ENCODE measurements at regions of chr7 and their contacts with region 1.

Region 1: DNA sequence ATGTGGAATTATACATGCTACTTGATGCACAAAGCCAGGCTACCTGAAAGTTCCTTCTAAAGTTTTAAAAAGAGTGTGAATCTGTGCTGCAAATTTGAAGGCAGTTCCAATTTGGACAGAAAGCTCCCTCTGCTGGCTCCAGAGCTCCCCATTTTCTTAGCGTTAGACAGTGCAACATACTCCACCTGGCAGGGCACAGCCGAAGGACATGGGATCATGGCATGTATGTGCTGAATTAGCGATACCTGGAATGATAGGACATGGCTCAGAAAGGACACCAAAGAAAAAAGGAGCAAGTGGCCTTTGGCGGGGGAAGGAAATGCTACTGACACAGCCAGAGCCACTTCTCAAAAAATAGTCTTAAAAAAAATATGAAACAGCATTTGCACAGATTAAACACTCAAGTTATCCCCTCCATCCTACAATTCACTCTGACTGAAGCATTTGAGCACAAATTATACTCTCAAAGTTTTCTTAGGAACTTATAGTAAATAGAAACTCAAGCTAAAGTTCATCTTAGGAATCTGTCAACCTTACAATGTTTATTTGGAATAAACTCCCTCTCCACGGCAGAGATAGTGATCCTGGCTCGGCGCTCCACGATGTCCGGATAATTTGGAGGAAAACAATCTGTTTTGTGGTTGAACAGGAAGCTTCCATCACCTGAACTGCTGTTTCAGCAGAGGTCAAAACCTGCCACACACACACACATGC is 80.0 kb downstream of the C7orf25 start:
- DNase-seq: no peak
- H3K4me3 ChIP-seq: peak overlapping the region in 3 of 4 donors; percentile 0 to 22 (median 4)
- H3K27ac ChIP-seq: peak overlapping the region in 2 of 4 donors; percentile 25 to 54
- H3K4me1 ChIP-seq: peaks cover 5 to 31% (median 28%) of the 10 kb centered on the region in 4 donors
- H3K27me3 ChIP-seq: no peaks in the 10 kb centered on the region
- CTCF ChIP-seq: peak; percentile 72 to 79 (median 75)
- EP300 ChIP-seq: no peak
- POLR2A ChIP-seq: no peak

Region 2: GRCh38 chr7:42493436-42494238 is 338.2 kb before region 1 on chr7:
- intact Hi-C with region 1: no loop called
- DNase-seq: peak; percentile 96
- H3K4me3 ChIP-seq: peak overlapping the region; percentile 56 to 71 (median 56)
- H3K27ac ChIP-seq: peak overlapping the region; percentile 78 to 90 (median 82)
- H3K4me1 ChIP-seq: peaks cover 14 to 45% (median 41%) of the 10 kb centered on the region in 4 donors
- H3K27me3 ChIP-seq: no peaks in the 10 kb centered on the region
- CTCF ChIP-seq: peak in 1 of 3 experiments; percentile 17
- EP300 ChIP-seq: peak; percentile 92
- POLR2A ChIP-seq: no peak

Region 3: DNA sequence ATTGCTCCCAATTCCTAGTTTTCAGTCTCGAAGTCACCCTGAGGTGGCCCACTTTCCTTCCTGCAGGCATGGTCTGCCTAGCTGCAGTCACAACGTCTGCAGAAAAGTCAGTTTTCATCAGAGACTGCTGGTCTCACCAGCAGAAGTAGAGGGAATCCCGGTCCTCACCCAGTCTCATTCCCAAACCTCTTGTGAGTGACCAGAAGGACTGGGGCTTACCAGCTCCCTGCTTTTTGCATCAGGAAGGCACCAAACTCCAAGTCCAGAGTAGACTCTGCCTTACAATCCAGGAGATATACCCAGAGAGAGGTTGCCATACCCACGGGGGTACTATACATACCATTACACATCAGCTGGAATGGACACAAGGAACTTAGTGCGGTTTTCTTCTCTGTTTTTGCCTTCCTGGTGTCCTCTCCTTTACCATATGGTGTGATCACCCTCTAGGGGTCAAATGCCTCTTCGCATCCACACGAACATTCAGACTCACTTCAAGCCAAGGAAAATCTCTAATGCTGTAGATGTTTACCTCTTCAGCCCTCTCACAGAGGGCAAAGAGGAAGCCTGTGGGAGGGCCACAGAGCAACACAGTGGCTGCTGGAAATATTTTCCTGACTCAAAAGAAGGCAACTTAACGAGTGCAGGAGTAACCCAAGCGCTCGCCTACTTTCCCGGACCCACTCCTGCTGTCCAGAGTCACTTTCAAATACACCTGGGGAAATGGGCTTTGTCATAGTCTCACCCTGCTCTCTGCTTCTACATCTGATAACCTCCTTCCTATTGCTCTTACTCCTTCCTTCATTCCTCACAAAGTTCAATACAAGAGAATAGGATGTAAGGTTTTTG is 140.9 kb before region 1 on chr7:
- intact Hi-C with region 1: loop called (anchors 10 kb)
- DNase-seq: peak; percentile 91
- H3K4me3 ChIP-seq: no peak overlapping the region
- H3K27ac ChIP-seq: peak overlapping the region in 1 of 4 donors; percentile 11
- H3K4me1 ChIP-seq: peaks cover 5 to 44% (median 36%) of the 10 kb centered on the region in 4 donors
- H3K27me3 ChIP-seq: no peaks in the 10 kb centered on the region
- CTCF ChIP-seq: peak; percentile 63 to 72 (median 66)
- EP300 ChIP-seq: no peak
- POLR2A ChIP-seq: no peak

Region 4: DNA sequence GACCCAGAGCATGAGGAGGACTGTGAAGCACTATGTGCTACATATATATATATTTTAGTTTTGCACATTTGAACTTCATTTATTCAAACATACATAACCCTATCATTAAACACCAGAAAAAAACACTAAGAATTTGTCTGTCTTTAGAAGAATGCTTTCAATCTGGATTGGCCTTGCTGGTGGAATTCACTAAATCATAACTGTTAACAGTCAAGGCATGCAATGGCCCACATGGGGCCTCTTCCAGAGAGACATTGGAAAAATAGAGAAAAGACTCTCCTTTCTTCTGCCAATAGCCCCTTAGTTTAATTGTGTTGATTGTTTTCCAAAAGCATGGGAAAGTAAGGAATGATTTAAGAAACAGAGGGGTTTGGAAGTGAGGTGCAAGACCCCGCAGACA is 178.2 kb after region 1 on chr7:
- intact Hi-C with region 1: no loop called
- DNase-seq: no peak
- H3K4me3 ChIP-seq: no peak overlapping the region
- H3K27ac ChIP-seq: no peak overlapping the region
- H3K4me1 ChIP-seq: no peaks in the 10 kb centered on the region
- H3K27me3 ChIP-seq: peaks cover 0 to 3% (median 0%) of the 10 kb centered on the region in 4 donors
- CTCF ChIP-seq: no peak
- EP300 ChIP-seq: no peak
- POLR2A ChIP-seq: no peak